Astrocyte of the cerebellum (primary cell): ENCODE measurements at regions of chr3 and their contacts with region 1.

Region 1: DNA sequence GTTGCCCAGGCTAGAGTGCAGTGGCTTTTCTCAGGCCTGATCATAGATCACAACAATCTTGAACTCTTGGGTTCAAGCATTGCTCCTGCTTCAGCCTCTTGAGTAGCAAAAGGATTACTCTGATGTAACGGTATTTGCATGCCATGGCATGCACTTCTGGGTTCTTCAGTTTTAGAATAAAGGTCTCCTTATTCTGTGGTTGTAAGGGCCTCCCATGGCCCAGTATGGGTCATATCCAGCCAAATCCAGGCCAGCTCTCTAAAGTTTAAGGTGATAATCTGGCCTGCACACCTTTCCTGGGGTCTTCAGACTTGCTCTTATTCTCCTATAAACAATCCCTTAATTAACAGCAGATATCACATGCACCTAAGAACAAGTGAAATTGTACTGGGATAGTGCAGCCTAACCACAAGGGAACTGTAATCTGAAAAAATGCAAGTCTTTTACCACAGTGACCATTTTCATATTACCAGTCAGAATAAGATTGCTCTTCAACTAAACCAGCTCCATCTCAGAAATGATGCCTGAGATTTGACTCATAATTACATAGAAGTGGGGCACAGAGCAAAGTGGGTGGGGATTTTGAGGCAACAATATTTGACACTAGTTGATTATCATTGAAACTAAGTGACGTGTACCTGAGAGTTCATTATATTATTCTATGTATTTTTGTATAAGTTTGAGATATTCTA is 25.4 kb downstream of the COMMD2 start:
- DNase-seq: no peak
- H3K4me3 ChIP-seq: no peak overlapping the region
- CTCF ChIP-seq: no peak

Region 2: GRCh38 chr3:149163066-149163465 is 563.8 kb before region 1 on chr3:
- in situ Hi-C with region 1: no loop called
- DNase-seq: no peak
- H3K4me3 ChIP-seq: no peak overlapping the region
- CTCF ChIP-seq: no peak

Region 3: DNA sequence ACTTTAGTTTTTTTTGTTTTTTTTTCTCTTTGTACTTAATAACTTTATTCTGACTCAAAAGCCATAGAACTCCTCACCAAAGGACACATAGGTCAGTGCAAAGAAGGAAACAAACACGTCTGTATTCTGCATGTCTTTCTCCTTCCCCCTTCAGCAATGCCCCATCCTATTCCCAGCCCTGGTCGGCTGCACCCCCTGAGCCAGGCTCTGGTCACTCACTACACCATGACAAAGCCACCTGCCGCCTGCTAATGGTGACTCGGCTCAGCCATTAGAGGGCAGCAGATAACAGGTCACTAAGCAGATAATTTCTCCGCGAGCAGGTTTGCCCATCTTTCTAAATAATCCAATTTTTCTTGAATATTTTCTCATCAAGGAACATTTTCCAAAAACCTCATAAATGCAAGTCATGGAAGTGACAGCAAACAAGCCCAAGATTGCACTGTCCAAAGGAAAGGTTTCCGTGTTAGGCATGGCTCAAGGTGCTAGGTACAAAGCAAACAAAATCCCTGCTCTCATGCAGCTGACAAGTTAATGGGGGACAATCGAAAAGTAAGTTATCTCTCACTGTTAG is 214.6 kb before region 1 on chr3:
- in situ Hi-C with region 1: loop called (anchors 25 kb)
- DNase-seq: no peak
- H3K4me3 ChIP-seq: no peak overlapping the region
- CTCF ChIP-seq: peak; percentile 68